Mucosa of descending colon (tissue), 3 donors: ENCODE measurements at regions of chr7 and their contacts with region 1.

Region 1: GRCh38 chr7:44565097-44565794 is 8.5 kb downstream of the DDX56 start:
- DNase-seq: peak; percentile 75 to 86 (median 80)
- ATAC-seq: peak; percentile 88
- H3K4me3 ChIP-seq: no peak overlapping the region
- H3K4me1 ChIP-seq: peaks cover 10% of the 10 kb centered on the region
- CTCF ChIP-seq: peak; percentile 97

Region 2: GRCh38 chr7:44240983-44241510 is 324.2 kb before region 1 on chr7:
- intact Hi-C with region 1: loop called in 1 of 2 experiments (anchors 10 kb)
- DNase-seq: peak; percentile 65 to 78 (median 75)
- ATAC-seq: peak; percentile 91
- H3K4me3 ChIP-seq: no peak overlapping the region
- H3K4me1 ChIP-seq: no peaks in the 10 kb centered on the region
- CTCF ChIP-seq: peak; percentile 45

Region 3: GRCh38 chr7:44375236-44375699 is 190.0 kb before region 1 on chr7:
- intact Hi-C with region 1: no loop called
- DNase-seq: no peak
- ATAC-seq: peak; percentile 8
- H3K4me3 ChIP-seq: no peak overlapping the region
- H3K4me1 ChIP-seq: no peaks in the 10 kb centered on the region
- CTCF ChIP-seq: no peak

Region 4: DNA sequence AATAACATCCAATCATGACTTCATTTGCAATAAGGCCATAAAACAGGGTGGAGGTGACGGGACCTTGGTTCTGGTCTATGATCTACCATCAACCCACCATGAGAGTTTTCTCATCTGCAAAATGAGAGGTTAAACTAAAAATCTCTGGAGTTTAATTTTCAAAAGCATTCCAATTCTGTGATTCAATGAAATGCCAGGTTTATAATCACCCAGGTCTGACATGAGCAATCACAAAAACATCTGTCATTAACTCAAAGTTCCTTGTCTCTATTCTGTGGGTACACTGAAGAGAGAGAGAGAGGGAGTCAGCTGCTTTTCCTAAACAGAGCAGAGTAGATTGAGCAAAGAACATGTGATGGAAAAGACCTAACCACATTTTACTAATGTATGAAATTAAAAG is 150.2 kb before region 1 on chr7:
- intact Hi-C with region 1: no loop called
- DNase-seq: no peak
- ATAC-seq: no peak
- H3K4me3 ChIP-seq: no peak overlapping the region
- H3K4me1 ChIP-seq: no peaks in the 10 kb centered on the region
- CTCF ChIP-seq: no peak